BJ (cell line): ENCODE measurements at regions of chr4 and their contacts with region 1.

Region 1: GRCh38 chr4:124478470-124478869 is 234.1 kb downstream of the ANKRD50 start:
- DNase-seq: no peak
- H3K4me3 ChIP-seq: no peak overlapping the region
- H3K27me3 ChIP-seq: no peaks in the 10 kb centered on the region
- CTCF ChIP-seq: no peak

Region 2: GRCh38 chr4:124499261-124499660 is 20.8 kb after region 1 on chr4:
- CTCF ChIA-PET with region 1: no interaction called
- POLR2A ChIA-PET with region 1: interaction called, 17 read pairs
- DNase-seq: no peak
- H3K4me3 ChIP-seq: no peak overlapping the region
- H3K27me3 ChIP-seq: no peaks in the 10 kb centered on the region
- CTCF ChIP-seq: no peak